H1 (cell line): ENCODE measurements at regions of chr15 and their contacts with region 1.

Region 1: DNA sequence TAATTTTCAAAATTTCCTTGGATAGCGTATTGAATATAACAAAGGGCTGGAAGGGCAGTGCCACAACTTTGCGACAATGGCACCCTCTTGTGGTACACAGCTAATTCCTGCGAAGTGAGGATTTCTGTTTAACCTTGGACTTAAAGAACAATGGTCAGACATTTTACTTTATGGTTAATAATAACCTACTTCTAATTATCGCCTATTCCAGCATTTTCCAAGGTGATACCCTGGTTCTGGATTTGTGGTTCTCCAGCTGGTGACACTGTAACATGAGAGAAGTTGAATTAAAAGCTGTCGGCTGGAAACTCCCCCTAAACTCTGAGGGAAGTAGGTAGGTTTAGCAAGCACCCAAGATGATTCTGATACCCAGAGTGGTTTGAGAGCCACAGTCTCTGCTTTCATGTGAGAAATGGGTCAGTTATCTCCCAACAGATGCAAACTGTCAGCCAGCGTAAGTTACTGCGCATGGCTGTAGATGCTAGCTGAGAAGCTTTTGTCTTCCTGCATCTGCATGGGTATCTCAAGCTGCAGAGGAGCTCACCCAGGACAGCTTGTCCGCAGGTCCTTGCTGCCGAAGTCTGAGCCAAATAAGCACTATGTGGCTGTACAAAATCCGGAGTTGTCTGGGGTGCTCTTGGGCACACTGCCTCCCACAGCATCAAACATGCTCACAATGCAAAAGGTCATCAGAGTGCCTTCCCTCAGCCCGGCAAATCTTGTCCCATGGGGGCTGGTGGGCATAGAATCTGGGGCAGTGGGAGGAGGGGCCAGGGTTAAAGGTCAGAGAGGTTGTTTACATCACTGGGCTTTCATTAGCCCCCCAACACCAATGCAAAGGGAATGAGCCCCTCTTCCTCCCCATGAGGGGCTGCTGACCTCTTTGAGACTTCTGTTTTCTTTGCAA is 6.6 kb upstream of the CHSY1 start:
- DNase-seq: peak in 1 of 2 experiments; percentile 47
- H3K4me3 ChIP-seq: no peak overlapping the region
- H3K27ac ChIP-seq: no peak overlapping the region
- H3K4me1 ChIP-seq: peaks cover 2 to 13% (median 9%) of the 10 kb centered on the region in 4 experiments; a peak in 5 of 7 replicates
- H3K27me3 ChIP-seq: no peaks in the 10 kb centered on the region
- CTCF ChIP-seq: peak; percentile 55 to 81 (median 79)
- EP300 ChIP-seq: no peak
- POLR2A ChIP-seq: no peak
- RAD21 ChIP-seq: peak; percentile 93 to 94

Region 2: GRCh38 chr15:101024073-101024695 is 234.3 kb before region 1 on chr15:
- CTCF ChIA-PET with region 1: interaction called, 57 read pairs
- POLR2A ChIA-PET with region 1: no interaction called
- DNase-seq: no peak
- H3K4me3 ChIP-seq: no peak overlapping the region
- H3K27ac ChIP-seq: no peak overlapping the region
- H3K4me1 ChIP-seq: no peaks in the 10 kb centered on the region; a peak in 1 of 7 replicates
- H3K27me3 ChIP-seq: no peaks in the 10 kb centered on the region
- CTCF ChIP-seq: no peak
- EP300 ChIP-seq: no peak
- POLR2A ChIP-seq: no peak
- RAD21 ChIP-seq: no peak

Region 3: GRCh38 chr15:101088788-101089583 is 169.5 kb before region 1 on chr15:
- CTCF ChIA-PET with region 1: interaction called, 11 read pairs
- POLR2A ChIA-PET with region 1: interaction called, 3 read pairs
- DNase-seq: peak; percentile 34 to 98
- H3K4me3 ChIP-seq: no peak overlapping the region
- H3K27ac ChIP-seq: no peak overlapping the region
- H3K4me1 ChIP-seq: peaks cover 0 to 1% (median 0%) of the 10 kb centered on the region in 4 experiments; a peak in 3 of 7 replicates
- H3K27me3 ChIP-seq: no peaks in the 10 kb centered on the region
- CTCF ChIP-seq: peak; percentile 89 to 95 (median 89)
- EP300 ChIP-seq: 0 out of 3 replicates have a peak, but pooled peaks of 1 of the 2 experiments have one; percentile 37
- POLR2A ChIP-seq: no peak
- RAD21 ChIP-seq: peak; percentile 81 to 91

Region 4: GRCh38 chr15:101138913-101139880 is 119.3 kb before region 1 on chr15:
- CTCF ChIA-PET with region 1: interaction called, 10 read pairs
- POLR2A ChIA-PET with region 1: no interaction called
- DNase-seq: no peak
- H3K4me3 ChIP-seq: no peak overlapping the region
- H3K27ac ChIP-seq: no peak overlapping the region
- H3K4me1 ChIP-seq: peaks cover 0 to 5% (median 0%) of the 10 kb centered on the region in 4 experiments; a peak in 1 of 7 replicates
- H3K27me3 ChIP-seq: no peaks in the 10 kb centered on the region; a peak in 1 of 7 replicates
- CTCF ChIP-seq: no peak
- EP300 ChIP-seq: no peak
- POLR2A ChIP-seq: no peak
- RAD21 ChIP-seq: no peak

Region 5: DNA sequence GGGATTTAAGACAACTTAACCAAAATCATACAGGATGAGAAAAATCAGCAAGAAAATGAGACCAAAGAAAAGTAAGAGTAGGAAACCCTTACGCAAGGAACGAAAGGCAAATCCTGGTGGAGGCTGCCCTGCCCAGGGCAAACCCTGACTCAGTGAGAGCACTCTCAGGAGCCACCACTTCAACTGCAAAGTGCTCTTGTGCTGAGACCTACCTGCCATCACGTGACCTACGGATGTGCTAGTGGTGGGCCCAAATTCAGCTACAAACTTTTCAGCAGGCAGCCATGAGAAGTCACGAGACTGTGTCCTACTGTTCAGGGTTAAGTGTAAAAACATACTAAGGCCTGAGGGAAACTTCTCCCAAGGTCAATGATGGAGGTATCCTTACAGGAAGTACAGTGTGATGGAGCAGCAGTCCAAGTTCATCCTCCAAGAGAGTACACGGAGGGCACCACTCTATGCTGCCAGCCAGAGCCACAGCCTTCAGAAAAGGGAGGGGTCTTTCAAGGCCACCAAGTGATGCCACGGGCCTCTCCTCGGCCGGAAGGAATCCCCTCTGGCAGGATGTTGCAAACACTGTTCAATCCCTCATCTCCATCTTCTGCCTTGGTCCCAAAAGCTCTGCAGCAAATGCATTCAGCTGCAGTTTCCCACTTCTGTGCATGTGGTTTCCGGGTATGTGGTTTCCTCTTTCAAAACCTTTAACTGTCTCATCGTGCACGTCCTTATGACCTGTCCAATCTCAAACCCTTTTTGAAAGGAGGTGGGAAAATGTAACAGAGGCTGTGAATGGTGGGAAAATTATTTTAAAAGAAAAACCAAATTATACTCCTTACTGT is 16.1 kb before region 1 on chr15:
- CTCF ChIA-PET with region 1: interaction called, 27 read pairs
- POLR2A ChIA-PET with region 1: interaction called, 18 read pairs
- DNase-seq: no peak
- H3K4me3 ChIP-seq: no peak overlapping the region; a peak in 1 of 8 replicates
- H3K27ac ChIP-seq: no peak overlapping the region
- H3K4me1 ChIP-seq: peaks cover 3 to 23% (median 11%) of the 10 kb centered on the region in 4 experiments; a peak in 5 of 7 replicates
- H3K27me3 ChIP-seq: no peaks in the 10 kb centered on the region
- CTCF ChIP-seq: no peak
- EP300 ChIP-seq: no peak
- POLR2A ChIP-seq: no peak
- RAD21 ChIP-seq: no peak